Breast epithelium (tissue), 4 donors: ENCODE measurements at regions of chr7 and their contacts with region 1.

Region 1: GRCh38 chr7:115582956-115583355 is 447.6 kb downstream of the TFEC start:
- DNase-seq: no peak
- H3K4me3 ChIP-seq: no peak overlapping the region
- H3K27ac ChIP-seq: no peak overlapping the region
- H3K4me1 ChIP-seq: no peaks in the 10 kb centered on the region
- H3K27me3 ChIP-seq: no peaks in the 10 kb centered on the region
- CTCF ChIP-seq: no peak
- POLR2A ChIP-seq: no peak

Region 2: GRCh38 chr7:114302858-114303257 is 1280.1 kb before region 1 on chr7:
- intact Hi-C with region 1: loop called (anchors 5 kb)
- DNase-seq: no peak
- H3K4me3 ChIP-seq: no peak overlapping the region
- H3K27ac ChIP-seq: no peak overlapping the region
- H3K4me1 ChIP-seq: no peaks in the 10 kb centered on the region
- H3K27me3 ChIP-seq: no peaks in the 10 kb centered on the region
- CTCF ChIP-seq: no peak
- POLR2A ChIP-seq: no peak